ENCODE measurements at regions of chr2 and their contacts with region 1.

Region 1: DNA sequence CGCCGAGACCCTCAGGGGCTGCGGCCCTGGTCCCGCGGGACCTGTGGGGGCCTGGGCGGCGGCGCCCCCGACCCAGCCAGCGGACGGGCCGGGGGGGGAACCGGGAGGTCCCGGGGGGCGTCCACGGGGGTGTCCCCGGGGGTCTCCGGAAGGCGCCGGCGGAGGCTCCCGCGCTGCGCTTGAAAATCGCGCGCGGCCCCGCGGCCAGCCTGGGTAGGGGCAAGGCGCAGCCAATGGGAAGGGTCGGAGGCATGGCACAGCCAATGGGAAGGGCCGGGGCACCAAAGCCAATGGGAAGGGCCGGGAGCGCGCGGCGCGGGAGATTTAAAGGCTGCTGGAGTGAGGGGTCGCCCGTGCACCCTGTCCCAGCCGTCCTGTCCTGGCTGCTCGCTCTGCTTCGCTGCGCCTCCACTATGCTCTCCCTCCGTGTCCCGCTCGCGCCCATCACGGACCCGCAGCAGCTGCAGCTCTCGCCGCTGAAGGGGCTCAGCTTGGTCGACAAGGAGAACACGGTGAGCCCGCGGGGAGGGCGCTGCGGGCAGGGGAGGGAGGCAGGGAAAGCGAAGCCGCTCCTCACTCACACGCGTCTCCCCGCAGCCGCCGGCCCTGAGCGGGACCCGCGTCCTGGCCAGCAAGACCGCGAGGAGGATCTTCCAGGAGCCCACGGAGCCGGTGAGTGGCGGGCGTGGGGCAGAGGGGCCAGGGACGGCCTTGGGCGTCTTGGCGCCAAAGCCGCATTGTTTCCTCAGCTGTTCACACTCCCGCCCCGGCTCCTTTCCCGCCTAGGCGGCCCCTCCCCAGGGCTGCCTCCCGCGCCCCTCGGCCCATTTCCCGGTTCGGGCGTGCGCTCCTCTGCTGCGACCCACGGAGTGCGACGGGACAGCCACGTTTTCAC is at the start of gene RRM2:
- DNase-seq: no peak
- ATAC-seq: peak; percentile 83
- H3K4me3 ChIP-seq: peak within 1 kb of the TSS; percentile 54 to 72
- H3K27ac ChIP-seq: peak within 1 kb of the TSS; percentile 100
- H3K4me1 ChIP-seq: peaks cover 35% of the 10 kb centered on the region
- H3K27me3 ChIP-seq: no peaks in the 10 kb centered on the region
- CTCF ChIP-seq: no peak
- total RNA-seq, gene RRM2: 294 TPM

Region 2: DNA sequence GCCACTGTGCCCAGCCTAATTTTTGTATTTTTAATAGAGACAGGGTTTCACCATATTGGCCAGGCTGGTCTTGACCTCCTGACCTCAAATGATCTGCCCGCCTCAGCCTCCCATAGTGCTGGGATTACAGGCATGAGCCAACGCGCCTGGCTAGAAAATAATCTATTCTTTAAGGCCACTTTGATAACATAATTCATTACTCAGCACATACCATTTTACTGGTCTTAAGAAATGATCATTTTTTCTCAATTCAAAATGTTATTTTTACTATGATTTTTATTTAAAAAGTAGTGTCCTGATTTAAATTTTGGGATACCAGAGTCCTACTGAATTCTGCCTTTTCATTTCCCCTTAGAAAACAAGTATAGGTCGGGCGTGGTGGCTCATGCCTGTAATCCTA is 540.0 kb before region 1 on chr2:
- CTCF ChIA-PET with region 1: no interaction called
- POLR2A ChIA-PET with region 1: no interaction called
- in situ Hi-C with region 1: no loop called
- intact Hi-C with region 1: no loop called
- DNase-seq: no peak
- ATAC-seq: no peak
- H3K4me3 ChIP-seq: no peak overlapping the region
- H3K27ac ChIP-seq: no peak overlapping the region
- H3K4me1 ChIP-seq: 0 out of 2 replicates have a peak, but pooled peaks cover 2% of the 10 kb centered on the region
- H3K27me3 ChIP-seq: no peaks in the 10 kb centered on the region
- CTCF ChIP-seq: no peak

Region 3: GRCh38 chr2:10408649-10409579 is 286.3 kb after region 1 on chr2:
- CTCF ChIA-PET with region 1: interaction called, 14 read pairs
- POLR2A ChIA-PET with region 1: no interaction called
- in situ Hi-C with region 1: no loop called
- intact Hi-C with region 1: no loop called
- DNase-seq: peak; percentile 74
- ATAC-seq: peak; percentile 53
- H3K4me3 ChIP-seq: 0 out of 4 replicates have a peak overlapping the region, but pooled peaks of 1 of the 2 experiments have one; percentile 1
- H3K27ac ChIP-seq: peak overlapping the region; percentile 99
- H3K4me1 ChIP-seq: peaks cover 72% of the 10 kb centered on the region
- H3K27me3 ChIP-seq: no peaks in the 10 kb centered on the region
- CTCF ChIP-seq: peak; percentile 98

Region 4: GRCh38 chr2:10434886-10435819 is 312.5 kb after region 1 on chr2:
- CTCF ChIA-PET with region 1: interaction called, 4 read pairs
- POLR2A ChIA-PET with region 1: interaction called, 6 read pairs
- in situ Hi-C with region 1: loop called (anchors 25 kb)
- intact Hi-C with region 1: loop called (anchors 2 kb)
- DNase-seq: no peak
- ATAC-seq: peak; percentile 61
- H3K4me3 ChIP-seq: no peak overlapping the region
- H3K27ac ChIP-seq: peak overlapping the region; percentile 26; the same call in 1 of the 2 replicates
- H3K4me1 ChIP-seq: peaks cover 43% of the 10 kb centered on the region
- H3K27me3 ChIP-seq: no peaks in the 10 kb centered on the region
- CTCF ChIP-seq: peak; percentile 97

Measured in Panc1 (cell line).